MCF 10A (cell line): ENCODE measurements at regions of chr10 and their contacts with region 1.

Region 1: GRCh38 chr10:11757821-11758463 is 15.8 kb downstream of the ECHDC3 start:
- DNase-seq: peak; percentile 85
- H3K4me3 Mint-ChIP-seq: no peak overlapping the region
- H3K27ac Mint-ChIP-seq: peak overlapping the region; percentile 80
- H3K4me1 Mint-ChIP-seq: peaks cover 9% of the 10 kb centered on the region
- H3K27me3 Mint-ChIP-seq: no peaks in the 10 kb centered on the region
- CTCF ChIP-seq: peak; percentile 90

Region 2: DNA sequence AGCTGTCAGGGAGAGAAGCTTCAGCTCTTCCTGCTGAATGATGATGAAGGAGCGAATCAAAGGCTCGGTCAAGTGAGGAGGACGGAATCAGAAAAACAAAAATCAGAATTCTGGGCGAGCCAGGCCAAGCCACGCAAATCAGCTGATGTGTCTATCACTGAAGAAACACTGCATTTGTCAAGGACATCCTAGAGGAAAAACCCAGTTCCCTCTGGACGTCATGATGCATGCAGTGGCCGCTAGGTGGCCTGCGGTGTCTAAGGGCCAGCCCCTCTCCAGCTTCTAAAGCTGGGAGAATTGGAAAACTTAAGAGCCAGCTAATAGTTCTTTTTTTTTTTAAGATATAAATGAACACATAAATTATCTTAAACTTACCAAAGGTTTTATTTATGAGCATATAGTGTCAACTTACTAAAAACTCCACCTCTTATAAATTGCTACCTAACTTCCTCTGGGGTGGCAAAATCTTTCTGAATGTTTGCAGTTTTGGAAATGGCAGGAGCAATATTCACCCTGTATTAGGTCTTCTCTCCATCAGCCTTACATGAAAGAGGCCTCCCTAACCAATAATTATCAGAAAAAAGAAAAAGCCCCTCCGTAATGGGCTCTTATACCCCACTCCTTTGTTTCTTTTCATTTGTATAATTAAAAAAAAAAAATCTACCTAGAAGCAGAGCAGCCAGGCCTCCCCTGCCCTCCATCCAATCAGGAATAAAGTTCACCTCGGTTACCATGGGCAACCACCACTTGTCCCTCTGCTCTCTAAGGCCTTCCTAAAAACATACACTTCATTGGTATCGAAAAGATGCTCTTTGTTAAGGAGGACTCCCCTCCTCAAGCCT is 333.3 kb before region 1 on chr10:
- CTCF ChIA-PET with region 1: interaction called, 7 read pairs
- POLR2A ChIA-PET with region 1: no interaction called
- intact Hi-C with region 1: loop called (anchors 2 kb)
- DNase-seq: peak; percentile 57
- H3K4me3 Mint-ChIP-seq: no peak overlapping the region
- H3K27ac Mint-ChIP-seq: no peak overlapping the region
- H3K4me1 Mint-ChIP-seq: no peaks in the 10 kb centered on the region
- H3K27me3 Mint-ChIP-seq: no peaks in the 10 kb centered on the region
- CTCF ChIP-seq: peak; percentile 78

Region 3: DNA sequence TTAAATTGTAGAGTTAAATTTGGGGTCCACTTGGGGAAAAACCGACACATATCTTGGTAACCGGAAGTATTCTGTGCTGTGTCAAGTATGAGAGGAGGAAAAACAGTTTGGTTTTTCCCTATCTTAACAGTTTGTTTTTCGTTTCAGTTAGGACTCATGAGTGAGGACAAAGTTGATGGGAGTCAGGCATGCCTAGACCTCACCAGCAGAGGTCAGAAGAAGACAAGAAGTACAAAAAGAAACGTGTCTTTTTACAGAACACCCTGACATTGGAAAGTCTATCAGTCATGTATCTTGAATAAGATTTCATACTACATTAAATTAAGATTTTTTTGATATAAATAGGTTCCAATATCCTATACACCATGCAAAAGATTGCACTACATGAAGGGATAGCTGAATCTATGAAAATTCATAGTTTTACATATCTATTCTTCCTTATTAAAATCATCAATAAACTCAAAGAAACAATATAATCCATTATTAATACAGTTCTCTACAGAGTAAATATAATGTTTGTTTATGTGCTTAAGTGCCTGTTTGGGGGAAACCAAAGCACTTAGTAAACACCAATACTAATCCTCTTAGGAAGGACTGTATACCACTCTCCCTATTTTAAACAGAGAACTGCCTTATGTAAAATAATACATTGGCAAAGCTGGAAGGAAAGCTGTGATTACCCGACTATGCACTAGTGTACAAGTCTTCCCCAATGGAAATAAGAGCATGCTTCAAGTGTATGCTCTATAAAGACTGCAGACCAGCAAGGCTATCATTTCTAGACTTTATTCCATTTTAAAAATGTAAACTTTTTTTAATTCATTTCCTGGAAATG is 242.1 kb before region 1 on chr10:
- CTCF ChIA-PET with region 1: interaction called, 44 read pairs
- POLR2A ChIA-PET with region 1: interaction called, 12 read pairs
- intact Hi-C with region 1: loop called (anchors 1 kb)
- DNase-seq: peak; percentile 72
- H3K4me3 Mint-ChIP-seq: no peak overlapping the region
- H3K27ac Mint-ChIP-seq: no peak overlapping the region
- H3K4me1 Mint-ChIP-seq: no peaks in the 10 kb centered on the region
- H3K27me3 Mint-ChIP-seq: no peaks in the 10 kb centered on the region
- CTCF ChIP-seq: peak; percentile 77

Region 4: GRCh38 chr10:11522821-11523245 is 235.1 kb before region 1 on chr10:
- CTCF ChIA-PET with region 1: interaction called, 18 read pairs
- POLR2A ChIA-PET with region 1: interaction called, 15 read pairs
- intact Hi-C with region 1: no loop called
- DNase-seq: peak; percentile 45
- H3K4me3 Mint-ChIP-seq: no peak overlapping the region
- H3K27ac Mint-ChIP-seq: no peak overlapping the region
- H3K4me1 Mint-ChIP-seq: peaks cover 13% of the 10 kb centered on the region
- H3K27me3 Mint-ChIP-seq: no peaks in the 10 kb centered on the region
- CTCF ChIP-seq: no peak

Region 5: DNA sequence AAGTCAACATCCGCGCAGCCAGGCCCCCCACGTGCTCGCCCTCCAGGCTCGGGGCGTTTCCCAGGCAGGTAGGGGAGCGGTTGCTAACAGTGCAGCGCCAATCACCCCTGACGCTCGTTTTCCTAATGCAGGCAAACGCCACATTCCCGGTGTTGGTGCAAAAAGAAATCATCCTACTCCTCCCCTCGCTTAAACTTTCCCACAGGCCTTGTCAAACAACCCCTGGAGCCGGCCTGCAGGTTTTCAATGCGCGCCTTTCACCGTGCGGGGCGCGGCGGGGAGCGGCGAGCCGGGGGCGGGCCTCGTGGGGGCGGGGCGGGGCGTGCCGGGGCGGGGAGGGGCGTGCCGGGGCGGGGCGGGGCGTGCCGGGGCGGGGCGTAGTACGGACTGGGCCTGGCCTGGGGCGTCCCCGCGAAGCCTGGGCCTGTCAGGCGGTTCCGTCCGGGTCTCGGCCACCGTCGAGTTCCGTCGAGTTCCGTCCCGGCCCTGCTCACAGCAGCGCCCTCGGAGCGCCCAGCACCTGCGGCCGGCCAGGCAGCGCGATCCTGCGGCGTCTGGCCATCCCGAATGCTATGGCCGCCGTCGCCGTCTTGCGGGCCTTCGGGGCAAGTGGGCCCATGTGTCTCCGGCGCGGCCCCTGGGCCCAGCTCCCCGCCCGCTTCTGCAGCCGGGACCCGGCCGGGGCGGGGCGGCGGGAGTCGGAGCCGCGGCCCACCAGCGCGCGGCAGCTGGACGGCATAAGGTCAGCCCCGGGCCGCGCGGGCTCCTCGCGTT is 15.8 kb before region 1 on chr10 and contains the start of gene ECHDC3:
- CTCF ChIA-PET with region 1: interaction called, 20 read pairs
- POLR2A ChIA-PET with region 1: interaction called, 20 read pairs
- intact Hi-C with region 1: no loop called
- DNase-seq: peak; percentile 56
- H3K4me3 Mint-ChIP-seq: peak within 1 kb of the TSS; percentile 75
- H3K27ac Mint-ChIP-seq: peak within 1 kb of the TSS; percentile 81
- H3K4me1 Mint-ChIP-seq: peaks cover 18% of the 10 kb centered on the region
- H3K27me3 Mint-ChIP-seq: peaks cover 12% of the 10 kb centered on the region
- CTCF ChIP-seq: no peak
- total RNA-seq, gene ECHDC3: 21.7 and 25.5 TPM in 2 replicates